ENCODE measurements at regions of chr9 and their contacts with region 1.

Region 1: GRCh38 chr9:70609542-70610286 is 195.3 kb upstream of the KLF9 start:
- DNase-seq: no peak
- ATAC-seq: peak; percentile 57

Region 2: GRCh38 chr9:70136632-70137031 is 473.1 kb before region 1 on chr9:
- intact Hi-C with region 1: no loop called
- DNase-seq: no peak
- ATAC-seq: no peak

Region 3: DNA sequence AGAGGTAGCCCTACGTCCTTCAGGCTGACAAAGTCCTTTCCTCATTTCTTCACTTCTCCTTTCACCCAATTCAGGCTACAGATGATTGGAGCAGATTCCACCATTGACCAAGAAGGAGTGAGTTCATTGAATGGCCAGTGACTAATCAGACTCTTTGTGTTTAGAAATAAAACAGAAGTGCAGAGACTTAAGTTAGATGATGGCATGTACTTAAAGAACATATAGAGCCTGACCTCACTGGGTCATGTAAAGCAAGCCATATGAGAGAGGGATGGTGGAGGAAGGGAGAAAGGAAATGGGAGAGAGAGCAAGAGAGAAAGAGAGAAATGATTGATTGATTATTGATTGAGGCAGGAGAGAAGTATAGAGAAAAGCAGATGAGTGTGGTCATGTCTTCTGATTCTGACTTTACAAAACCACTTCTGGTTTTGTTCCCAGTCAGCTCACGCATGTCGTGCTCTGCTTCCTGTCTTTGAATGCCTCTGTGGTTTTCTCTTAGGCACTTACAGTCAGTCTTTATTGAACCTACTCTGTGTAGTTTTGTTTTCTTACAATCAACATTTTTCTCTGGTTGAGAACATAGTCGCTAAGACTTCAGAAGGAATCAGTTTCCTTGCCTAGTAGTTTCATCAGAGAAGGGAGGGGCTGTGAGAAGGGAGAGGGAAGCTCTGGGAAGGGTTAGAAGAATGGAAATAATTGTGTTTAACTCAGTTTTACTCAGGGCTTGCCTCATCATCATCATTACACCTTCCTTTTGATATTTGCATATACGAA is 46.1 kb before region 1 on chr9:
- intact Hi-C with region 1: loop called (anchors 10 kb)
- DNase-seq: no peak
- ATAC-seq: peak; percentile 52